ENCODE measurements at regions of chr5 and their contacts with region 1.

Region 1: GRCh38 chr5:158953929-158954534 is 145.7 kb downstream of the EBF1 start:
- DNase-seq: peak; percentile 89
- ATAC-seq: peak; percentile 79
- H3K4me3 ChIP-seq: peak overlapping the region in 4 of 5 experiments; percentile 1 to 51 (median 20)
- H3K4me3 Mint-ChIP-seq: peak overlapping the region; percentile 68
- H3K27ac ChIP-seq: peak overlapping the region; percentile 82 to 84
- H3K27ac Mint-ChIP-seq: peak overlapping the region; percentile 88
- H3K4me1 ChIP-seq: peaks cover 91 to 93% of the 10 kb centered on the region in 2 donors
- H3K4me1 Mint-ChIP-seq: peaks cover 94% of the 10 kb centered on the region
- H3K27me3 ChIP-seq: no peaks in the 10 kb centered on the region
- H3K27me3 Mint-ChIP-seq: no peaks in the 10 kb centered on the region
- CTCF ChIP-seq: no peak

Region 2: DNA sequence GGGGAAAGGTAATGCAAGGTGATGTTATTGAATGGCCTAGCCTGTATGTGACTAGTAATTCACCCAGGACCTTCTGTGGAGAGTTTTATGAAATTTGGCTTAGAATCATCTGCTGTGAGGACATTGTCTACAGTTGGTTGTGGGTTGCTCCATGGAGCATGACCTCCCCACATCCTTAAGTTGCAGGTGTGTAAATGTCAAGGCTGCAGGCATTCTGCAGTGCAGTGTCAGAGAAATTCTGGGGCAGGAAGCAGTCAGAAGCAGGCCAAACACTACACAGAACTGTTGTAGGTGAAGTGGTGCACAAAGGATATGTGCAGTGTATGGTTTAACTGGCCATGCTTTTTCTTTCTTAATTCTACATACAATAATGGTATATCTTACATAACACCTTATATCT is 442.6 kb before region 1 on chr5:
- CTCF ChIA-PET with region 1: no interaction called
- POLR2A ChIA-PET with region 1: no interaction called
- intact Hi-C with region 1: loop called (anchors 5 kb)
- DNase-seq: peak; percentile 74
- ATAC-seq: peak; percentile 98
- H3K4me3 ChIP-seq: no peak overlapping the region
- H3K4me3 Mint-ChIP-seq: peak overlapping the region; percentile 33
- H3K27ac ChIP-seq: peak overlapping the region in 1 of 2 donors; percentile 21
- H3K27ac Mint-ChIP-seq: peak overlapping the region; percentile 64
- H3K4me1 ChIP-seq: peaks cover 45 to 46% of the 10 kb centered on the region in 2 donors
- H3K4me1 Mint-ChIP-seq: peaks cover 49% of the 10 kb centered on the region
- H3K27me3 ChIP-seq: no peaks in the 10 kb centered on the region
- H3K27me3 Mint-ChIP-seq: no peaks in the 10 kb centered on the region
- CTCF ChIP-seq: no peak

Region 3: DNA sequence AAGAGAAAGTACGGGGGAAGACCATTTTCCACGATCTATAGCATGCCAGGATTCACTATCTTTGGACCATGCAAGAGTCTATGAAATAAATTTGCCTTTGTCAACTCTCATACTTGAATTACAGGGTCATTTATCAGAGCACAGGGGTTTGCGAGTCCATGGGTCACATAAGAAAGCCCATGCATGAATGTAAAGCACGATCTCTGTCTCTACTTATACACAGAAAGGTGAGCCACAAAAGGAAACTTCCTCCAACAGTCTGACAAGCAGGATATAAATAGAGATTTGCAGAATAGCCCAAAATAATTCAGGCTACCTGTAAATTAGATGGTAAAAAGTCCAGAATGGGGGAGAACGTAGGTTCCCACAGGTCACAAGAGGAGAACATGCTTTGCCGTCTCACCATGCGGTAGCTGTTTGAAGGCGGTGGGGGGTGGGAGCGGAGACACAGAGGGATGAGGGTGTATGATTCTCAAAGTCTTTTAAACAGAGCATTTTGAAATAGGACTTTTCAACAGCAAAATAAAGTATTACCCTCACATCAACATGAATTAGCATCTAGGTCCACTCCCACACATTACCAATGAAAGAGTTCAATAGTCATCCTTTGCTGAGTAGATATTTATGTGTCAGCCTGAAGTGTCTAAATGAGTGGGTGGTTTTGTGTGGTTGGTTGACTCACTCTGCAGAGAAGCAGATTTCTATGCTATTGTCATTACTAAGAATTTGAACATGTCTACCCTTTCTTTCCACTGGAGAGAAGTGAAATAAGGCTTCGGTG is 134.0 kb before region 1 on chr5:
- CTCF ChIA-PET with region 1: no interaction called
- POLR2A ChIA-PET with region 1: no interaction called
- intact Hi-C with region 1: loop called (anchors 2 kb)
- DNase-seq: peak; percentile 55
- ATAC-seq: peak; percentile 56
- H3K4me3 ChIP-seq: peak overlapping the region; percentile 2 to 50 (median 19)
- H3K4me3 Mint-ChIP-seq: peak overlapping the region; percentile 82
- H3K27ac ChIP-seq: peak overlapping the region; percentile 82 to 87
- H3K27ac Mint-ChIP-seq: peak overlapping the region; percentile 80
- H3K4me1 ChIP-seq: peaks cover 98 to 99% of the 10 kb centered on the region in 2 donors
- H3K4me1 Mint-ChIP-seq: peaks cover 97% of the 10 kb centered on the region
- H3K27me3 ChIP-seq: no peaks in the 10 kb centered on the region
- H3K27me3 Mint-ChIP-seq: no peaks in the 10 kb centered on the region
- CTCF ChIP-seq: no peak

Region 4: GRCh38 chr5:158898185-158899177 is 55.6 kb before region 1 on chr5:
- CTCF ChIA-PET with region 1: no interaction called
- POLR2A ChIA-PET with region 1: no interaction called
- intact Hi-C with region 1: loop called (anchors 1 kb)
- DNase-seq: peak; percentile 77
- ATAC-seq: peak; percentile 79
- H3K4me3 ChIP-seq: peak overlapping the region in 3 of 5 experiments; percentile 1 to 21 (median 18)
- H3K4me3 Mint-ChIP-seq: peak overlapping the region; percentile 58
- H3K27ac ChIP-seq: peak overlapping the region; percentile 76 to 83
- H3K27ac Mint-ChIP-seq: peak overlapping the region; percentile 70
- H3K4me1 ChIP-seq: peaks cover 35% of the 10 kb centered on the region in 2 donors
- H3K4me1 Mint-ChIP-seq: peaks cover 77% of the 10 kb centered on the region
- H3K27me3 ChIP-seq: no peaks in the 10 kb centered on the region
- H3K27me3 Mint-ChIP-seq: no peaks in the 10 kb centered on the region
- CTCF ChIP-seq: no peak

Region 5: DNA sequence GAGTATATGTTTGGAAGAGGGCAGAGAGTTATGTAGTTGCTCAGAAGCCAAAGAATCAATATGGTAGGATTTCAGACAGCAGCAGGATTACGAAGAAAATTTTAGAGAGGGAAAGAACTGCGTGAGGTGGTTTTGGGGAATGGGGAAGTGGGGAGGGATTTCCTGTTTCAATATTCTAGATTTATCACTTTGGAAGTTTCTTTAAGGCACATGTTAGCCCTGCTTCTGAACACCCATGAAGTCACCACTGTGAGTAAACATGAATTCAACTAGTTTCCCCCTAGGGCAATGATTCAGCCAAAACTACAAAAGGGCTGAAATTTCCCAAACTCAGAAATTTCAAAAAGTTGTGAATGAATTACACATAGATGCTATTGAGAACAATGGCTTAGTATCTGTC is 13.5 kb after region 1 on chr5:
- CTCF ChIA-PET with region 1: interaction called, 4 read pairs
- POLR2A ChIA-PET with region 1: no interaction called
- intact Hi-C with region 1: loop called (anchors 2 kb)
- DNase-seq: peak; percentile 22
- ATAC-seq: peak; percentile 41
- H3K4me3 ChIP-seq: no peak overlapping the region
- H3K4me3 Mint-ChIP-seq: peak overlapping the region; percentile 7
- H3K27ac ChIP-seq: no peak overlapping the region
- H3K27ac Mint-ChIP-seq: peak overlapping the region; percentile 26
- H3K4me1 ChIP-seq: peaks cover 19 to 28% of the 10 kb centered on the region in 2 donors
- H3K4me1 Mint-ChIP-seq: peaks cover 70% of the 10 kb centered on the region
- H3K27me3 ChIP-seq: no peaks in the 10 kb centered on the region
- H3K27me3 Mint-ChIP-seq: no peaks in the 10 kb centered on the region
- CTCF ChIP-seq: no peak

Region 6: DNA sequence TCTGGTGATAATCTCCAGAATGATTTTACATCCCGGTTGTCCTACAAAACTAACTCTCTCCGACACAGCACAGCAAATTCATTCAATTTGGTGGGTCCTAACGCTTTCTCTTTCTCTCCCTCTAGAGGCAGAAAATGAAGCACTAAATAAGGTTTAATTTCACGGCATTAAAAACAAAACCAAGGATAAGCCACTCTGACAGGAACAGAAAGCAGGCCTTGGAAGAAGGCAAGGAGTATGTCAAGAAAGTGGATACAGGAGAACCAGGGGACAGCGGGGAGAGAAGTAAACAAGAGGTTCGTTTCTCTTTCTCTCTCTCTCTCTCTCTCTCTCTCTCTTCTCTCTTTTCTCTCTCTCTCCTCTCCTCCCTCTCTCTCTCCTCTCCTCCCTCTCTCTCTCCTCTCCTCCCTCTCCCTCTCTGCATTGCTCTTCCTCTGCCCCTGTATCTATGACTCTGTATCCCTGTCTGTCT is 95.8 kb after region 1 on chr5:
- CTCF ChIA-PET with region 1: interaction called, 6 read pairs
- POLR2A ChIA-PET with region 1: no interaction called
- intact Hi-C with region 1: loop called (anchors 5 kb)
- DNase-seq: peak; percentile 57
- ATAC-seq: no peak
- H3K4me3 ChIP-seq: peak overlapping the region in 3 of 5 experiments; percentile 16 to 28 (median 17)
- H3K4me3 Mint-ChIP-seq: peak overlapping the region; percentile 91
- H3K27ac ChIP-seq: peak overlapping the region; percentile 74 to 80
- H3K27ac Mint-ChIP-seq: peak overlapping the region; percentile 92
- H3K4me1 ChIP-seq: peaks cover 65 to 68% of the 10 kb centered on the region in 2 donors
- H3K4me1 Mint-ChIP-seq: peaks cover 95% of the 10 kb centered on the region
- H3K27me3 ChIP-seq: no peaks in the 10 kb centered on the region
- H3K27me3 Mint-ChIP-seq: no peaks in the 10 kb centered on the region
- CTCF ChIP-seq: peak; percentile 61

Region 7: GRCh38 chr5:159286420-159287035 is 332.5 kb after region 1 on chr5:
- CTCF ChIA-PET with region 1: no interaction called
- POLR2A ChIA-PET with region 1: no interaction called
- intact Hi-C with region 1: no loop called
- DNase-seq: peak; percentile 69
- ATAC-seq: peak; percentile 67
- H3K4me3 ChIP-seq: no peak overlapping the region
- H3K4me3 Mint-ChIP-seq: no peak overlapping the region
- H3K27ac ChIP-seq: no peak overlapping the region
- H3K27ac Mint-ChIP-seq: no peak overlapping the region
- H3K4me1 ChIP-seq: no peaks in the 10 kb centered on the region
- H3K4me1 Mint-ChIP-seq: no peaks in the 10 kb centered on the region
- H3K27me3 ChIP-seq: no peaks in the 10 kb centered on the region
- H3K27me3 Mint-ChIP-seq: no peaks in the 10 kb centered on the region
- CTCF ChIP-seq: peak; percentile 82

Region 8: GRCh38 chr5:159441441-159441840 is 487.4 kb after region 1 on chr5:
- CTCF ChIA-PET with region 1: no interaction called
- POLR2A ChIA-PET with region 1: no interaction called
- intact Hi-C with region 1: no loop called
- DNase-seq: no peak
- ATAC-seq: peak; percentile 21
- H3K4me3 ChIP-seq: no peak overlapping the region
- H3K4me3 Mint-ChIP-seq: no peak overlapping the region
- H3K27ac ChIP-seq: no peak overlapping the region
- H3K27ac Mint-ChIP-seq: no peak overlapping the region
- H3K4me1 ChIP-seq: peaks cover 0 to 7% of the 10 kb centered on the region in 2 donors
- H3K4me1 Mint-ChIP-seq: peaks cover 12% of the 10 kb centered on the region
- H3K27me3 ChIP-seq: no peaks in the 10 kb centered on the region
- H3K27me3 Mint-ChIP-seq: no peaks in the 10 kb centered on the region
- CTCF ChIP-seq: no peak

Region 9: GRCh38 chr5:160399402-160400353 is 1445.6 kb after region 1 on chr5 and contains the start of gene FAM200C:
- CTCF ChIA-PET with region 1: no interaction called
- POLR2A ChIA-PET with region 1: interaction called, 11 read pairs
- intact Hi-C with region 1: no loop called
- DNase-seq: peak; percentile 73
- ATAC-seq: peak; percentile 76
- H3K4me3 ChIP-seq: peak within 1 kb of the TSS; percentile 59 to 92 (median 78)
- H3K4me3 Mint-ChIP-seq: peak within 1 kb of the TSS; percentile 83
- H3K27ac ChIP-seq: peak within 1 kb of the TSS in 1 of 2 donors; percentile 74
- H3K27ac Mint-ChIP-seq: peak within 1 kb of the TSS; percentile 54
- H3K4me1 ChIP-seq: peaks cover 4 to 11% of the 10 kb centered on the region in 2 donors
- H3K4me1 Mint-ChIP-seq: peaks cover 14% of the 10 kb centered on the region
- H3K27me3 ChIP-seq: no peaks in the 10 kb centered on the region
- H3K27me3 Mint-ChIP-seq: no peaks in the 10 kb centered on the region
- CTCF ChIP-seq: no peak
- total RNA-seq, gene FAM200C: 1.3 TPM in 2 replicates